CD8-positive, alpha-beta T cell (primary cell): ENCODE measurements at regions of chr17 and their contacts with region 1.

Region 1: GRCh38 chr17:20992987-20993862 is 49.6 kb downstream of the USP22 start:
- DNase-seq: peak; percentile 32 to 76 (median 61)
- ATAC-seq: peak; percentile 93
- H3K4me3 ChIP-seq: no peak overlapping the region
- H3K4me3 Mint-ChIP-seq: no peak overlapping the region
- H3K27ac ChIP-seq: no peak overlapping the region
- H3K27ac Mint-ChIP-seq: no peak overlapping the region
- H3K4me1 ChIP-seq: peaks cover 2% of the 10 kb centered on the region
- H3K4me1 Mint-ChIP-seq: peaks cover 9% of the 10 kb centered on the region
- H3K27me3 ChIP-seq: no peaks in the 10 kb centered on the region
- H3K27me3 Mint-ChIP-seq: no peaks in the 10 kb centered on the region
- CTCF ChIP-seq: peak; percentile 87

Region 2: DNA sequence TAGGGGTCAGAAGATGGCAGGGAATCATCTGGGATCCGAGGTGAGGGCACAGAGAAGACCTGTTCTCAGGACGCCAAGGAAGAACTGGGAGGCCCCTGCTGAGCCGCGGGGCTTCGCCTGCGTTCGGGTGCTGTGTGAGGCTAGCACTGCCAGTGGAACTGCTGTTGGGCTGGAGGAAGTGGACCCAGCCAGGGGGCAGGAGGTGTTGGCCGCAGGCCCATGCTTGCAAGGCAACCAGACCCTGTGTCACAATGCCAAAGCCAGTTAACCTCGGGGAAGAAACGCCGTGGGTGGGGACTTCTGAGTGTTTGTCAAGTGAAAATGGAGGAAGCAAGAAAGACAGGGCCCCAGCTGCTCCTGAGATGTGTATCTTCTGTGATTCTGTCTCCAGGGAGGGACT is 711.4 kb before region 1 on chr17:
- CTCF ChIA-PET with region 1: no interaction called
- POLR2A ChIA-PET with region 1: no interaction called
- intact Hi-C with region 1: no loop called
- DNase-seq: no peak
- ATAC-seq: no peak
- H3K4me3 ChIP-seq: no peak overlapping the region
- H3K4me3 Mint-ChIP-seq: no peak overlapping the region
- H3K27ac ChIP-seq: no peak overlapping the region
- H3K27ac Mint-ChIP-seq: no peak overlapping the region
- H3K4me1 ChIP-seq: peaks cover 15% of the 10 kb centered on the region
- H3K4me1 Mint-ChIP-seq: peaks cover 29% of the 10 kb centered on the region
- H3K27me3 ChIP-seq: no peaks in the 10 kb centered on the region
- H3K27me3 Mint-ChIP-seq: no peaks in the 10 kb centered on the region
- CTCF ChIP-seq: no peak

Region 3: DNA sequence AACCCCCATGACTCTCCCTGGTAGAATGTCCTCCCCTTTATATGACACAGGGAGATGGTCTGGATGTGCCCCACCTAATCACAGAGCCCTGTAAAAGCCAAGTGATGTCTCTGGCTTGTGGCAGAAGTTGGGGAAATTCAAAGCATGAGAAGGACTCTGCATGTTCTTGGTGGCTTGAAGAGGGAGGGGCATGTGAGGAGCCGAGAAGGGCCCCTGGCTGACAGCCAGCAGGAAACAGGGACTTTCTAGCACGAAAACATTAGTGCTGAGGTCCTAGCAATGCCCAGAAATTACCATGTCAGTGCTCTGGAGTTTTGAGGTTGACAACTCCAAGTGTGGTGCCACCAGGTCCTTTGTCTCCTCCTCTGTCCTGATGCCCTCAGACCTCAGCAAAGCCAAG is 26.4 kb before region 1 on chr17:
- CTCF ChIA-PET with region 1: no interaction called
- POLR2A ChIA-PET with region 1: no interaction called
- intact Hi-C with region 1: no loop called
- DNase-seq: peak in 2 of 9 experiments; percentile 35 to 67
- ATAC-seq: no peak
- H3K4me3 ChIP-seq: no peak overlapping the region
- H3K4me3 Mint-ChIP-seq: no peak overlapping the region
- H3K27ac ChIP-seq: no peak overlapping the region
- H3K27ac Mint-ChIP-seq: no peak overlapping the region
- H3K4me1 ChIP-seq: peaks cover 8% of the 10 kb centered on the region
- H3K4me1 Mint-ChIP-seq: peaks cover 10% of the 10 kb centered on the region
- H3K27me3 ChIP-seq: peaks cover 0 to 6% of the 10 kb centered on the region in 2 experiments
- H3K27me3 Mint-ChIP-seq: peaks cover 11% of the 10 kb centered on the region
- CTCF ChIP-seq: no peak

Region 4: DNA sequence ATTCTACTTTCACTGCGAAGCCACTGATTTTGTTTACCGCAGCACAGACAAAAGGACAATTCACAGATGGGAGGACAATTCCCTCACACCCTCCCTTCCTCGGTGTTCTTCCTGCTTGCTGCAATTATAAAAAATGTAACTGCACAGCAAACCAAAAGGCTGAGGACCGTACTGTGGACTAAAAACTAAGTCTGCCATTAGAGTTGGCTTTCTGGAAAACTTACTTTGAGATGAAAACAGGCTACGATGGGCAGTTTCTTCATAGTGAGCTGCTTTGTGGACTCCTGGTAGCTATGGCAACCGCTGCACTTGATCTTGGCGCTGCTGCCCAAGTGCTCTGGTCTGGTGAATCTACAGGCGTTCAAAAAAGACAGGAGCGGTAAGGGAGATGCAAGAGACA is 14.4 kb after region 1 on chr17:
- CTCF ChIA-PET with region 1: interaction called, 10 read pairs
- POLR2A ChIA-PET with region 1: no interaction called
- intact Hi-C with region 1: no loop called
- DNase-seq: no peak
- ATAC-seq: no peak
- H3K4me3 ChIP-seq: no peak overlapping the region
- H3K4me3 Mint-ChIP-seq: no peak overlapping the region
- H3K27ac ChIP-seq: no peak overlapping the region
- H3K27ac Mint-ChIP-seq: no peak overlapping the region
- H3K4me1 ChIP-seq: no peaks in the 10 kb centered on the region
- H3K4me1 Mint-ChIP-seq: no peaks in the 10 kb centered on the region
- H3K27me3 ChIP-seq: no peaks in the 10 kb centered on the region
- H3K27me3 Mint-ChIP-seq: no peaks in the 10 kb centered on the region
- CTCF ChIP-seq: no peak